A673 (cell line): ENCODE measurements at regions of chr2 and their contacts with region 1.

Region 1: DNA sequence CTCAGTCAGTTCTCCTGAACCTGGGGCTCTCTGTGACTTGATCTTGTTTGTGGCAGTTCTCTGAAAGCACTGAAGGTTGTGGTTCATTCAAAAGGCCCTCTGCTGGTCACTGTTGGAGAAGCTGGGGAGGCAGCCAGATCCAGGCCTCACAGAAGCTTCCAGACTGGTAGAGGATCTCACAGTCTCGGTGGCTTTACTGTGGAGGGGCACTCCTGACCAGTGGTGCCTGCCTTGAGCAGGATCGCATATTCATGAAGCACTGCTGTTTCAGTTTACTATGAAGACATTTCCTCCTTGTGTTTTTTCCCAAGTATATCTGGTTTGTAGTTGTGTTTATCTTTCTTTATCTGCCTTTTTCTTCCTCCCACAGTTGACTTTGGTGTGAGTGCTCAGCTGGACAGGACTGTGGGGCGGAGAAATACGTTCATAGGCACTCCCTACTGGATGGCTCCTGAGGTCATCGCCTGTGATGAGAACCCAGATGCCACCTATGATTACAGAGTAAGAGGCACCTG is 133.9 kb downstream of the MAP4K4 start:
- DNase-seq: peak; percentile 73
- H3K4me3 ChIP-seq: no peak overlapping the region
- H3K27ac ChIP-seq: no peak overlapping the region
- H3K4me1 ChIP-seq: no peaks in the 10 kb centered on the region
- H3K27me3 ChIP-seq: no peaks in the 10 kb centered on the region
- CTCF ChIP-seq: peak; percentile 71

Region 2: DNA sequence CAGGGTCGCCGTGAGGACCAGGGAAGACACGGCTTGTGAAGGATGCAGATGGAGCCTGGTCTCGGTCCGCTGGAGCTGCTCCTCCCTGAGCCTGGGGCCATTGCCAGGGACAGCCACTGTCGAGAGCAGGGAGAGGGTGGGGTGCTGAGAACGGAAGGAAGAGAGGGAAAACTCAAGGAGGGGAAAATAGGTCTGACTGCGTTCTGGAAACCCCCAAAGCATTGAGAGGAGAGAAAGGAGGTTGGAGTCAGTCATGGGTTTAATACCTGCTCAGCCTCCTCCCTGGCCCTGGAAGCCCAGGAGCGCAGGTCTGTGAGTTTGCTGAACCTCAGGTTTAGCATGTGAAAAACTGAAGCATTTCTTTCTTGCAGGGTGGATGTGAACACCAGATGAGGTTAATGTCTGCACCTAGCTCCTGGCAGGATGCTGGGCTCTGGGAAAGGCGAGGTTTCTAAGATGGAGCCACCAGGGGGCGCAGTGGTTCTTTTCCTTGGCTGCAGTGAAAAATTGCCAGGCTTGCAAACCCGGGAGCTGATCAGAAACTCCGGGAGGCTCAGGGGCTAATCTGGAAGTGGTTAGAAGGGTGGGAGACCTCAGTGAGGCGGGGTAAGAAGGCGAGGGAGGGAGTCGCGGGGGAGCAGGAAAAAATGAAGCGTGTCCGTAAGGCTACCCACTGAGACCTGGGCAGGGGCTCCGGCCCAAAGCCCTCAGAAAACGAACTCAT is 489.3 kb before region 1 on chr2:
- CTCF ChIA-PET with region 1: interaction called, 11 read pairs
- POLR2A ChIA-PET with region 1: no interaction called
- intact Hi-C with region 1: no loop called
- DNase-seq: peak; percentile 80
- H3K4me3 ChIP-seq: no peak overlapping the region
- H3K27ac ChIP-seq: no peak overlapping the region
- H3K4me1 ChIP-seq: no peaks in the 10 kb centered on the region
- H3K27me3 ChIP-seq: no peaks in the 10 kb centered on the region
- CTCF ChIP-seq: peak; percentile 89

Region 3: DNA sequence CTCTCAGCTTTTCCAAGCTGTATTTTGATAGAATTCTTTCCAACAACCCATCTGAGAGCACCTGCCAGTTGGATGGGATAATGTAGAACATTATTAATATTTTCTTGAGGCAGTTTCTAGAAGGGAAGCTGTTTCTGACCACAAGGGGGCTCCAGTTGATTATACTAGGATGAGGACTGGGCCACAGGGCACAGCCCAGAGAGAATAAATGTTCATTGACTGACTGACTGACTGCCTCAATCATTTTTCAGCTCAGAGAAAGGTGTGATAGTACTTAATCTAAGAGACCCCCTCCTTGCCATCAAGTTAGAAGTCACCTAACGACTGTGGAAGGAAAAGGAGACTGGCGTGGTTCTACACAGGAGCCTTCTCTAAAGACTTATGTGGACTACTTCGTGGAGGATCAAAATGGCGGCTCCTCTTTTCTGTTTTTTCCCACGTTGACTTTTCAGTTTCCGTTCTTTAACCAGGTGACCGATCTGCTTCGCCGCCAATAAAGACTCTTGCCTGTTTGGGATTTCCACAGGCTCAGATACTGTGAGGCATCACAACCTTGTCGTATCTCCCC is 412.2 kb before region 1 on chr2:
- CTCF ChIA-PET with region 1: interaction called, 10 read pairs
- POLR2A ChIA-PET with region 1: no interaction called
- intact Hi-C with region 1: loop called (anchors 1 kb)
- DNase-seq: peak; percentile 73
- H3K4me3 ChIP-seq: no peak overlapping the region
- H3K27ac ChIP-seq: no peak overlapping the region
- H3K4me1 ChIP-seq: no peaks in the 10 kb centered on the region
- H3K27me3 ChIP-seq: no peaks in the 10 kb centered on the region
- CTCF ChIP-seq: peak; percentile 77

Region 4: DNA sequence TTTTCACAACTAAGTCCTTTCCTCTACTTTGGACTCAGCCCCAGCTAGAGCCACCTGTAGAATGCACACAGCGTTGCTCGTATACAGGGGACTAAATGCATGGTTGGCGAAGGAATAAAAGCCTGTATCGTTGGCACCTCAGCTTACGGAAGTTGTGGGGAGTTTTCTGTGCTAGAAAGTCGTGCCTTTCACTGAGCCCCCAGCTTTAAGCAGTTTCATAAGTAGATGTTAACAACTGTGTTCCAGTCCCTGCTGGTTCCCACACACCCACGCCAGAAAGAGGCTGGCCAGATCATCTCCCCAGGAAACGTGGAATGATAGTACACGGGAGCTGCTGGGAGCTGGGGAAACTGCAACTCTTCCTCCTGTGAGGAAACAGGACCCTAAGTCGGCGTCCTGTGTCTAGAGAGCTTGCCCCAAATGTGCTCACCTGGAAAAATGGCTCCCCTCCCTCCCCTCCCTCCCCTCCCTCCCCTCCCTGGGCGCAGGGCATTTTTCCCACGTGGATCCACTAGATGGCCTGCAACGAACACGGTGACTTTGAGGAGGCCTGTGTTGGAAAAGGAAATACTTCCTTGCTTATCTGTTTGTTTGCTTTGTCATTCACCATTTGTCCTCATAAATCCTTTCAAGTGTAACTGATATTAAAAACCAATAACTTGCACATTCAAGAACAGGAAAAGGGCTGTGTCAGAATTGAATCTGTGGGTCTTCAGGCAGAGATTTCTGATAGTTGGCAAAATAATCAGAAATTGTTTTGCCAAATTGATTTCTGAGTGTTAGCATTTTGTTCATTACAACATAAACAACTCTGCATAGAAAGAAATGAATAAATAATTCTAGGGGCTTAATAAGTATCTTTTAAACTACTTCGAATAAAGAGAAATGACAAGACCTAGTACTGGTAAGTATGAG is 312.6 kb before region 1 on chr2:
- CTCF ChIA-PET with region 1: no interaction called
- POLR2A ChIA-PET with region 1: no interaction called
- intact Hi-C with region 1: loop called (anchors 5 kb)
- DNase-seq: peak; percentile 60
- H3K4me3 ChIP-seq: no peak overlapping the region
- H3K27ac ChIP-seq: no peak overlapping the region
- H3K4me1 ChIP-seq: peaks cover 3% of the 10 kb centered on the region
- H3K27me3 ChIP-seq: no peaks in the 10 kb centered on the region
- CTCF ChIP-seq: peak; percentile 56

Region 5: GRCh38 chr2:101697124-101698013 is 134.0 kb before region 1 on chr2 and contains the start of gene MAP4K4:
- CTCF ChIA-PET with region 1: interaction called, 10 read pairs
- POLR2A ChIA-PET with region 1: no interaction called
- intact Hi-C with region 1: loop called (anchors 5 kb)
- DNase-seq: peak; percentile 93
- H3K4me3 ChIP-seq: peak within 1 kb of the TSS; percentile 68
- H3K27ac ChIP-seq: peak within 1 kb of the TSS; percentile 82
- H3K4me1 ChIP-seq: peaks cover 9% of the 10 kb centered on the region
- H3K27me3 ChIP-seq: no peaks in the 10 kb centered on the region
- CTCF ChIP-seq: peak; percentile 42
- total RNA-seq, gene MAP4K4: 154 and 157 TPM in 2 replicates

Region 6: DNA sequence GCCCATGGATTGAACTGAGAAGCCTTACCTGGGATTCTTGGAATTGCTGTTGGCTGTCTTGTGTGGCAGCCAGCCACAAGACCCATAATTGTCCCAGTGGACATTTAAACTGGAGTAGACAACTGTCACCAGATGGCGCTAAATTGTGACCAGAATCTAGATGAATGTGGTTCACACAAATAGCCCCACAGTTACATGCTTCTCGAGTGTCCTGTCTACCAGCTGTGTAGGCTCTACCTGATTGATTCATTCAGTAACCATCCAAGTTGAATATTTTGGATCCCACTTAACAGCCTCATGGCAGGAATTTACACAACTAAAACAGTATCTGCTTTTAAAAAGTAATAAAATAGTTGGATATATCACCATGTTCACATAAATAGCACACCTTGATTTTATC is 60.7 kb before region 1 on chr2:
- CTCF ChIA-PET with region 1: interaction called, 17 read pairs
- POLR2A ChIA-PET with region 1: no interaction called
- intact Hi-C with region 1: loop called (anchors 5 kb)
- DNase-seq: peak; percentile 81
- H3K4me3 ChIP-seq: no peak overlapping the region
- H3K27ac ChIP-seq: no peak overlapping the region
- H3K4me1 ChIP-seq: peaks cover 59% of the 10 kb centered on the region
- H3K27me3 ChIP-seq: no peaks in the 10 kb centered on the region
- CTCF ChIP-seq: peak; percentile 70